AG04449 (cell line): ENCODE measurements at regions of chr14 and their contacts with region 1.

Region 1: DNA sequence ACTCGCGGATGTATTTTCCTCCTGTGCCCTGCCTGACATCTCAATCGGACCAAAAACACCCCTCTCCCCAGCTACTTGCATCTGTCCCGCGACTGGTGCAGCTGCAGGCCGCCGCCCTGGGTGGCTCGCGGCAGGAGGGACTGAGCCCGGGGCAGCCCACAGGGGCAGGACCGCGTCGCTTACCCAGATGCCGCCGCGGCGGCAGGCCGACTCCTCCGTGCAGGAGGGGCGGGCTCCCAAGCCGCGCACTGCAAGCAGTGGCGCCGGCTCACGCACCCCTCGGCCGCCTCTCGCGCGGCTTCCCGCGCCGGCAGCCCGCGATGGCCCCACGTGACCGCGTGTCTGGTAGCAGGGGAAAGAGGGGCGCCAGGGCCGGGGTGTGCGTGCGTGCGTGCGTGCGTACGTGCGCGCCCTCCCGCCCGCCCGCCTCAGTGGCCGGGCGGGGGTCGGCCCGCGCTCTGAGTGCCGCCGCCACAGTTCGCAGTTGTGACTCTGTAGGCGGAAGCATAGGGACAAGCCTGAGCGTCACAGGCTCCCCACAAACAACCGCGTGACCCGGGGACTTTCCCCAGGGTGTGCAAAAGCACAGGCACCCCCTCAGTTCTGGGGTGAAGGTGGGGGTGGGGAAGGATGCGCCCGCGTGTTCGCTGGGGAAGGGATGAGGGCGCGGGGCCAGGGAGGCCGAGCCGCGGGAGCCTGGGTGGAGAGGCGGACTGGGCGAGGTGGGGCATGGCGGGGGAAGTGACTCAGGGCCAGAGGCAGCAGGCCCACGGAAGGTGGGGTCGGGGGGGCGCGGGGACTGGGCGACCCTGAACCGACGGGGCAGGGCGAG is at the start of gene ZBTB25:
- DNase-seq: peak; percentile 58
- H3K4me3 ChIP-seq: peak within 1 kb of the TSS; percentile 86
- CTCF ChIP-seq: no peak

Region 2: GRCh38 chr14:64654246-64654900 is 150.7 kb after region 1 on chr14:
- CTCF ChIA-PET with region 1: no interaction called
- POLR2A ChIA-PET with region 1: interaction called, 13 read pairs
- DNase-seq: peak; percentile 87
- H3K4me3 ChIP-seq: no peak overlapping the region
- CTCF ChIP-seq: no peak